ENCODE measurements at regions of chr17 and their contacts with region 1.

Region 1: GRCh38 chr17:43079578-43080302 is 45.4 kb downstream of the BRCA1 start:
- DNase-seq: no peak
- H3K4me3 Mint-ChIP-seq: no peak overlapping the region
- H3K27ac Mint-ChIP-seq: no peak overlapping the region
- H3K4me1 Mint-ChIP-seq: peaks cover 3% of the 10 kb centered on the region
- H3K27me3 Mint-ChIP-seq: no peaks in the 10 kb centered on the region
- CTCF ChIP-seq: no peak

Region 2: DNA sequence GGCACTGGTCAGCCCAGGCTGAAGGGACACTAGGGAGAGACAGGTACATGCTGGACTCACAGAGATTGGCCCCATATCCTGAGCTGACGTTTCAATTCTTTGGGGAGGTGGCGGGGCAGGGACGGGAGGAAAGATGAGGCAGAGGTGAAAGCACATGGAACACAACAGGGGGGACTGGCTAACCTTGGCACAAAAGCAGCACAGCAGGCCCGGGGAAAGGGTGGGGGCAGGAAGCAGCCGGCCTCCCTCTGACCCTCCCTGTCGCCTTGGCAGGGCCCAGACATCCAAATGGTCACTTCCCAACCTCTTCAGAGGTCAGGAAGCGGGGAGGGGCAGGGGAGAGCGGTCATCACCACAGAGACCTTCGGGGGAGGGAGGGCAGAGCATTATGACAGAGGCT is 64.2 kb before region 1 on chr17:
- CTCF ChIA-PET with region 1: no interaction called
- intact Hi-C with region 1: no loop called
- DNase-seq: no peak
- H3K4me3 Mint-ChIP-seq: no peak overlapping the region
- H3K27ac Mint-ChIP-seq: peak overlapping the region; percentile 9
- H3K4me1 Mint-ChIP-seq: peaks cover 33% of the 10 kb centered on the region
- H3K27me3 Mint-ChIP-seq: no peaks in the 10 kb centered on the region
- CTCF ChIP-seq: no peak

Region 3: GRCh38 chr17:43118679-43119615 is 39.2 kb after region 1 on chr17:
- CTCF ChIA-PET with region 1: no interaction called
- intact Hi-C with region 1: loop called (anchors 5 kb)
- DNase-seq: peak; percentile 33
- H3K4me3 Mint-ChIP-seq: no peak overlapping the region
- H3K27ac Mint-ChIP-seq: peak overlapping the region; percentile 18
- H3K4me1 Mint-ChIP-seq: peaks cover 23% of the 10 kb centered on the region
- H3K27me3 Mint-ChIP-seq: no peaks in the 10 kb centered on the region
- CTCF ChIP-seq: no peak

Region 4: GRCh38 chr17:43175816-43176570 is 96.3 kb after region 1 on chr17:
- CTCF ChIA-PET with region 1: no interaction called
- intact Hi-C with region 1: no loop called
- DNase-seq: peak; percentile 22
- H3K4me3 Mint-ChIP-seq: peak overlapping the region; percentile 69
- H3K27ac Mint-ChIP-seq: peak overlapping the region; percentile 93
- H3K4me1 Mint-ChIP-seq: peaks cover 24% of the 10 kb centered on the region
- H3K27me3 Mint-ChIP-seq: no peaks in the 10 kb centered on the region
- CTCF ChIP-seq: no peak